Mammary epithelial cell (primary cell): ENCODE measurements at regions of chr19 and their contacts with region 1.

Region 1: GRCh38 chr19:7699417-7700401 is 2.2 kb downstream of the FCER2 start:
- DNase-seq: peak; percentile 31
- H3K4me3 ChIP-seq: no peak overlapping the region
- H3K27ac ChIP-seq: no peak overlapping the region
- H3K4me1 ChIP-seq: no peaks in the 10 kb centered on the region
- H3K27me3 ChIP-seq: no peaks in the 10 kb centered on the region
- CTCF ChIP-seq: no peak

Region 2: DNA sequence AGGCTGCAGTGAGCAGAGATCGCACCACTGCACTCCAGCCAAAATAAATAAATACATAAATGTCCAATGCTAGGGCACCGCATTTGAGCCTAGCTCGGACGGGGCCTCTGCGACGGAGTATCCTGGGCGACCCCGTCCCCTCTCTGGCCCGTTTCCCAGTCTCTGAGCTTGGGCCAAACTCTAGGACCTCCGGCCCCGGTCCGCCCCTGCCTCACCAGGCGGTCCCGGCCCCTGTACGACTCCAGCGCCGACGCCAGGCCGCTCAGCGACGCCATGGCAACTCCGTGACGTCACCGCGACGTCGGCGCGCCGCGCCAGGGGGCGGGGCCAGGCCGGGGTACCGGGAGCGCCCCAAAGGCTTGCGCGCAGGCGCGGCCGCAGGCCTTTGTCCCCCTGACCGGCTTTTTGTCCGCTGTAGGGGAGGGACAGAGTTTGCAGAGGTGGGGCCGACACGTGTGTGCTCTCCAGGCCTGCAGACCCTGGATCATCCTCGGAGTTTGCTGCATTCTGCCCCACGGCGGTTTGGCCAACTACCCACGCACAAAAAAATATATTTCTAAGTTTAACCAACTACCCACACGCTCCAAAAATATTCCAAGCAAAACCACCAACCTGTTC is 210.9 kb before region 1 on chr19 and contains the start of gene PEX11G:
- CTCF ChIA-PET with region 1: no interaction called
- dilution Hi-C with region 1: no loop called
- in situ Hi-C with region 1: no loop called
- intact Hi-C with region 1: no loop called
- DNase-seq: peak; percentile 69
- H3K4me3 ChIP-seq: peak within 1 kb of the TSS; percentile 65 to 83 (median 68)
- H3K27ac ChIP-seq: peak within 1 kb of the TSS; percentile 55
- H3K4me1 ChIP-seq: peaks cover 9% of the 10 kb centered on the region
- H3K27me3 ChIP-seq: no peaks in the 10 kb centered on the region
- CTCF ChIP-seq: no peak
- total RNA-seq, gene PEX11G: 5.7 to 6.8 TPM

Region 3: DNA sequence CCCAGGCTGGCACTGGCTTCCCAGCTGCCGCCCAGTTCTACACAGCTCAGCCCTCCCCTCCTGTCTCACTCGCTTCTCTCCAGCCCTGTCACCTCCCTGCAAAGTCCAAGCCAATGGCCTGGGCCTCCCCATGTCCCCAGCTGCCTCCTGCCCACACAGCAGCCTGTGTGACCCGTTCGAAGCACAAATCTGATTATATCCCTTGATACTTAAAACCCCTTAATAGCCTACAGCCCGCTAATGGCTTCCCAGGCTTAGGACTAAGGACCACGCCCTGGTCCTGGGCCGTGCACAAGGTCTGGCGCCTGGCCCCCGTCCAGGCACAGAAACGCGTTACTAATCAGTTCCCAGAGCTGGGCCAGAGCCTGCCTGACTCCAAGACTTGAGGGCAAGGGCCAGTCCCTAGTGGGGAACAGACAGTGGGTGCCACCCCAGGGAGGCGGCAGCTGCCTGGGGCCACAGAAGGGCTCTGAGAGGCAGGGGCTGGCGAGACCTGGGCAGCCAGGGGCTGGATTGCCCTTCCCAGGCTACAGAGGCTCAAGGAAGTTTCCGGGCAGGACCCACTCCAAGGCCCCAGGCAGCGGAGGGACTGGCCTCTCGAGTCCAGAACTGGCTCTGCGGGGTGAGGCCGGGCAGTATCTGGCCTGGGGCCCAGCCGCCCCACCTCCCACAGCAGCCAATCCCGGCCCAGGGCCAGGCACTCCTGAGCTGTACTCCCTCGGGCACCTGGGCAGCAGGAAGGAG is 80.8 kb before region 1 on chr19:
- CTCF ChIA-PET with region 1: no interaction called
- dilution Hi-C with region 1: loop called (anchors 5 kb)
- in situ Hi-C with region 1: no loop called
- intact Hi-C with region 1: no loop called
- DNase-seq: no peak
- H3K4me3 ChIP-seq: no peak overlapping the region
- H3K27ac ChIP-seq: no peak overlapping the region
- H3K4me1 ChIP-seq: no peaks in the 10 kb centered on the region
- H3K27me3 ChIP-seq: no peaks in the 10 kb centered on the region
- CTCF ChIP-seq: no peak

Region 4: DNA sequence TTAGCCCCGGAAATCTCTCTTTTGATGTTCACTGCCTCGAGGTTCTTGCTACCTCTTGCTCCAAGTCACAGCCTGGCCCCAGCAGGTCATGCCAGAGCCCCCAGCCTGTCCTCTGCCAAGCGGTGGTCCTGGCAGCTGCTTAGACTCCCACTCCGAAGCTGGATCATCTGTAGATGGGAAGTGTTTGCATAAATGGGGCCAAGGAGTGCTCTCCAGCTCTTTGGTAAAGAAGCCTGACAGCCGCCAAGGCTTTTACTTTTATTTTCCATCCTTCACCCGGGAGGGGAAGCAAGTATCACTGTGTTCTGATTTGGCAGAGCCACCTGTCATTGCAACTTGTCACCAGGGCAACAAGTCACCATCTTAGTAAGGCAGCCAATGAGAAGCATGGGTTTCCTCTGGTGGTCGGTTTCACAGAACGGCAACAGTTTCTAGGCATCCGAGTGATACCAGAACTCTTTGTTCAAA is 41.5 kb before region 1 on chr19:
- CTCF ChIA-PET with region 1: no interaction called
- dilution Hi-C with region 1: no loop called
- in situ Hi-C with region 1: no loop called
- intact Hi-C with region 1: no loop called
- DNase-seq: no peak
- H3K4me3 ChIP-seq: no peak overlapping the region
- H3K27ac ChIP-seq: no peak overlapping the region
- H3K4me1 ChIP-seq: no peaks in the 10 kb centered on the region
- H3K27me3 ChIP-seq: no peaks in the 10 kb centered on the region
- CTCF ChIP-seq: no peak

Region 5: GRCh38 chr19:7781157-7781556 is 81.4 kb after region 1 on chr19:
- CTCF ChIA-PET with region 1: no interaction called
- dilution Hi-C with region 1: no loop called
- in situ Hi-C with region 1: no loop called
- intact Hi-C with region 1: no loop called
- DNase-seq: no peak
- H3K4me3 ChIP-seq: no peak overlapping the region
- H3K27ac ChIP-seq: no peak overlapping the region
- H3K4me1 ChIP-seq: peaks cover 5% of the 10 kb centered on the region
- H3K27me3 ChIP-seq: peaks cover 3% of the 10 kb centered on the region
- CTCF ChIP-seq: no peak

Region 6: GRCh38 chr19:7792253-7792652 is 92.5 kb after region 1 on chr19:
- CTCF ChIA-PET with region 1: no interaction called
- dilution Hi-C with region 1: loop called (anchors 5 kb)
- in situ Hi-C with region 1: no loop called
- intact Hi-C with region 1: no loop called
- DNase-seq: peak; percentile 17
- H3K4me3 ChIP-seq: no peak overlapping the region
- H3K27ac ChIP-seq: no peak overlapping the region
- H3K4me1 ChIP-seq: no peaks in the 10 kb centered on the region
- H3K27me3 ChIP-seq: peaks cover 17% of the 10 kb centered on the region
- CTCF ChIP-seq: no peak

Region 7: GRCh38 chr19:7861955-7862951 is 162.5 kb after region 1 on chr19:
- CTCF ChIA-PET with region 1: no interaction called
- dilution Hi-C with region 1: no loop called
- in situ Hi-C with region 1: no loop called
- intact Hi-C with region 1: no loop called
- DNase-seq: no peak
- H3K4me3 ChIP-seq: peak overlapping the region in 1 of 3 experiments; percentile 30
- H3K27ac ChIP-seq: no peak overlapping the region
- H3K4me1 ChIP-seq: peaks cover 10% of the 10 kb centered on the region
- H3K27me3 ChIP-seq: no peaks in the 10 kb centered on the region
- CTCF ChIP-seq: no peak